ENCODE measurements at regions of chr4 and their contacts with region 1.

Region 1: DNA sequence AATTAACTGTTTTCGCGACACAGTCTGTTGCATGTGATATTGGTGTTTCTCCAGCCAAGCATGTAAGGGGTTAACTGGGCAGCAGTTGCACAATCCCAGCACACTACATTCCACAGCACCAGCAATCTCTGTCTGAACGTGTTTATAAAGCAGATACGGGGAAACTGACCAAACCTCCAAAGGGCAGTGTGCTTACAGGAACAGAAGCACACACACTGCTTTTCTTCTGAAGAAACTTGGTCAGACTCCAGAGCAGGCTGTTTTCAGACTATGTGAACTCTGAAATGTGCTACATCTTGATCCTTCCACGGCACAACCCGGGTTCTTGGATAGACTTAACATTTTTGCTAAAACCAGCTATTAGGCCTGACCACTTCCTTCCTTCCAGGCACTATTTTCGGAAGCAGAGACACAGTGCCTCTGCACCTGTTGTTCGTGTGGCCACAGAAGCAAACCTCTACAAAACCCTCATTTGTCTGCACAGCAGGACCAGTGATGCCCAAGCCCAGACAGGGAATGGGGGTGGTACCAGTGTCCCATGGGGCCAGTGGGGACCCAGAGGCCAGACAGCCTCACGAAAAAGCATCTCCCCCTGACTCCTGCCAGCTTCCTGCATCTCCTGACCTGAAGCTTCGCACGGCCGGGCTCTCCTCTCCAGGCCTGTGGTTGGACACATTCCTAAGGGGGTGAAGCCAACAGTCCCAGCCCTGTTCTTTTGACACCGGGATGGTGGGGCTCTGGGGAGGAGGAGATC is 90.1 kb downstream of the IRF2 start:
- DNase-seq: peak in 2 of 3 donors; percentile 45 to 83
- ATAC-seq: peak; percentile 64 to 81 (median 71)
- H3K4me3 ChIP-seq: peak overlapping the region in 2 of 3 donors; percentile 17 to 39
- H3K27ac ChIP-seq: peak overlapping the region; percentile 87 to 90 (median 88)
- H3K4me1 ChIP-seq: peaks cover 7 to 66% (median 33%) of the 10 kb centered on the region in 4 donors
- H3K27me3 ChIP-seq: no peaks in the 10 kb centered on the region
- CTCF ChIP-seq: no peak
- POLR2A ChIP-seq: peak; percentile 80

Region 2: GRCh38 chr4:184215709-184216328 is 168.4 kb before region 1 on chr4:
- intact Hi-C with region 1: no loop called
- DNase-seq: no peak
- ATAC-seq: no peak
- H3K4me3 ChIP-seq: no peak overlapping the region
- H3K27ac ChIP-seq: no peak overlapping the region
- H3K4me1 ChIP-seq: no peaks in the 10 kb centered on the region
- H3K27me3 ChIP-seq: no peaks in the 10 kb centered on the region
- CTCF ChIP-seq: no peak
- POLR2A ChIP-seq: no peak

Region 3: DNA sequence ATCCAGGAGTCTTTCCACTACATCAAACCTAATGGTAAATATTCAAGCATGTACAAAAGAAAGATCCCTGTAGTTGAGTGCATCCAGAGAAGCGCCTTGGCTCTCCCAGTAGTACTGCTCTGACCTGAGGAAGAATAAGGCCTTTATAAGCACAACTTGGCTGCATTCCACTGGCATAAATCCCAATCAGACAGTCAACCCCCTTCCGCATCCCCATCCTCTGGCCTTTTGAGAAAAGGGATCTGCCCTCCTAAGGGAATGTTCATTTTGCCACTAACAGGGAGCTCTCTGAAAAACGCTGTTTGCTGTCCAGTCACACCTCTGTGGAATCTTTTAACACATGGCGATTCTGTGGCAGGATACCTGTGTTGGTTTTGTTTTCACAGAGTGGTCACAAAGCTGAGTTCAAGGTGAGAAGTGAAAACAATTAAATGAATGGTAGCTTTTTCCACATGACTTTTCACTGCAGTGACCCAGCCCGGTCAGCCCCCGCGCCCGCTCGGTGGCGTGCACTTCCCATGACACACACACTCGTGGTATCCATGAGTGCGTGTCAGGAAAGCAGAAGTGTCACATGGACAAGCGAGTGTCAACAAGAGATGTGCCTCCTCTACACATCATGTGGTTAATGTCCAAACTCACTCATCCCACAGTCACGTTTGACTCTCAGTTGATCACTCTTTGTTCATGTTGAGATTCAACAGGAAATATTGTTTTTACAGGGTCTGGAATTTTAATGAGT is 54.4 kb before region 1 on chr4:
- intact Hi-C with region 1: no loop called
- DNase-seq: peak in 2 of 3 donors; percentile 47 to 48
- ATAC-seq: peak in 3 of 4 donors; percentile 5 to 47 (median 41)
- H3K4me3 ChIP-seq: no peak overlapping the region
- H3K27ac ChIP-seq: no peak overlapping the region
- H3K4me1 ChIP-seq: peaks cover 0 to 16% (median 5%) of the 10 kb centered on the region in 4 donors
- H3K27me3 ChIP-seq: no peaks in the 10 kb centered on the region
- CTCF ChIP-seq: no peak
- POLR2A ChIP-seq: no peak

Region 4: GRCh38 chr4:184347251-184348239 is 36.7 kb before region 1 on chr4:
- intact Hi-C with region 1: loop called (anchors 5 kb)
- DNase-seq: peak in 2 of 3 donors; percentile 58 to 69
- ATAC-seq: peak in 3 of 4 donors; percentile 0 to 2 (median 1)
- H3K4me3 ChIP-seq: peak overlapping the region in 1 of 3 donors; percentile 14
- H3K27ac ChIP-seq: peak overlapping the region; percentile 86 to 95 (median 93)
- H3K4me1 ChIP-seq: peaks cover 0 to 79% (median 34%) of the 10 kb centered on the region in 4 donors
- H3K27me3 ChIP-seq: no peaks in the 10 kb centered on the region
- CTCF ChIP-seq: no peak
- POLR2A ChIP-seq: peak; percentile 27